IMR-90 (cell line): ENCODE measurements at regions of chr10 and their contacts with region 1.

Region 1: DNA sequence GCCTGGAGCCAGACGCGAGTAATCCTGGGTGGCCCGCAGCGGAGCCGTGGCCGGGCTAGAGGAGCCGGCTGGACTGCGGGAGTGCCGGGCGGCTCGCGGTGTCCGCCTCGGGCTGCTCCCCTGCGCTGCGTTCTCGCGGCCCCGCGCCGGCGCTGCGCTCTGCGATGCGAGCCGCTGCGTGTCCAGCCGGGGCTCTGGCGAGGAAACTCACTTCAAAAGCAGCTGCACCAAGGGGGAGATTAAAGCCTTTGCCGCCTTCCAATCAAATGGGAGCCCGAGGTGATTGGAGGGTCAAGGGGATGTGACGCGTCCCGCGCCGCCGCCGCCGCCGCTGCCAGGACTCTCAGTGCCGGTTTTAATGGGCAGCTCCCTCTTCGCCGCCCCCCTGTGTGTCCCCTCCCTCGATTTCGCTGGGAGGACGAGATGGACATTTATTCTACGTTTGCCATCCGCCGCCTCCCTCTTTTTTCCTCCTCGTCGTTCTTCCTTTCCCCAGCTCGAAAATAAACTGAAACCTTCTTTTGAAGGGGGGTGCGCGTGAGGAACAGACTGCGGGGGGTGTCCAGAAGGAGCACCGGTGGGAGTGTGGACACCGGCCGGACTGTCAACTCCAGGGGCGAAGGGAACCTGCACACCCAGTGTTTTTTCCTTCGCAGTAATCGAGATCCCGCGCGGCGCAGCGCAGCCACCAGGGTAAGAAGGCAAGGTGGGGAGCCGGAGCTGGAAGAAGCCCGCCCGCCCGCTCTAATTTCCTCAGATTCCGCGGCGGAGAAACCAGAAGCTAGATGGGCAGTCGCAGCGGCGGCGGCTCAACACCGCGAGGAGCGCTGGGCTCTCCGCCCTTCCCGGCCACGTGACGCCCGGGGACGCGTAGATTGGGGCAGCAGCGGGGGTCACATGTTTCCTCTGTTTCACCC is at the start of gene ZNF503:
- DNase-seq: peak; percentile 97
- ATAC-seq: peak; percentile 67
- H3K4me3 ChIP-seq: peak within 1 kb of the TSS; percentile 99
- H3K27ac ChIP-seq: peak within 1 kb of the TSS; percentile 100
- H3K4me1 ChIP-seq: peaks cover 2% of the 10 kb centered on the region; the same call in 1 of the 2 replicates
- H3K27me3 ChIP-seq: 0 out of 2 replicates have a peak, but pooled peaks cover 3% of the 10 kb centered on the region
- CTCF ChIP-seq: 0 out of 2 replicates have a peak, but pooled peaks have one; percentile 6
- POLR2A ChIP-seq: peak; percentile 99
- RAD21 ChIP-seq: peak; percentile 26
- total RNA-seq, gene ZNF503: 0.36 and 0.83 TPM in 2 replicates

Region 2: DNA sequence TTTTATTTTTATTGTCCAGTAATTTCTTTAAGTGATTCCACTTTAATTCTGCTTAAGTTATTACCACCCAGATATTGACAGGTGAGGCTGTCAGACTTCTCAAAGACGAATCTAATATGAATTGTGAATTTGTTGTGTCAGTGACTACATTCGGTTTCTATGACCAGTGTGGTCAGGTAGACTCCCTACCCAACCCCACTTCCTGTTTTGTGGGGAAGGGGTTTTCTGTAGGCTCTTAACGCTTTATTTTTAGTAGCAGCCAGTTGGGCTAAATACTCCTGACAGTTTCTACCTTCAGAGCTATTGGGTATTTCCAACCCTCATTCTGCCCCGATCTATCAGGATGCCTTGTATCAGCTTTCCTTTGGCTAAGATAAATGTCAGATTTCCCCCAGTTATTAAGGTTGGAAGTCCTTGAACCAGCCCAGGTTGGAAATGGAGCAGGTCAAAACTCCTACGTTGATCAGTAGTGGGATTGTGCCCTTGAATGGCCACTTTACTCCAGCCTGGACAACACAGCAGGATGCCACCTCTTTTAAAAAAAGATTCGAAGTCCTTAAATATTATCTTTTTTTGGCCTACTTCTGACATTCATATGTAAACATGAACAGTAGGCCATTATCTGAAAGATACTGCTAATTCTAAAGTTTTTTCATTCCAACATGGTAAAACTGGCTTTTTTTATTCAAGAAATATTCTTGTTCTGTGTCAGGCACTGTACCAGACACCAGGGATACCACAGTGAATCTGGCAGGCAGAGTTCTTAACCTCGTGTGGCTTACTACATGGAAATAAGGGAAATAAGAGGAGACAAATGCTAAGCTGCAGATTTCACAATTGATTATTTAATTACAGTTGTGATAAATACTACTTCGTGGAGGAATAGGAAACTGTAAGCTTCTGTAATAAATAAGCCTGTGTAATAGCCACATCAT is 423.6 kb before region 1 on chr10:
- CTCF ChIA-PET with region 1: no interaction called
- POLR2A ChIA-PET with region 1: no interaction called
- dilution Hi-C with region 1: no loop called
- in situ Hi-C with region 1: no loop called
- intact Hi-C with region 1: no loop called
- DNase-seq: no peak
- ATAC-seq: no peak
- H3K4me3 ChIP-seq: no peak overlapping the region
- H3K27ac ChIP-seq: no peak overlapping the region
- H3K4me1 ChIP-seq: peaks cover 3% of the 10 kb centered on the region; the same call in 1 of the 2 replicates
- H3K27me3 ChIP-seq: no peaks in the 10 kb centered on the region
- CTCF ChIP-seq: no peak
- POLR2A ChIP-seq: no peak
- RAD21 ChIP-seq: no peak

Region 3: GRCh38 chr10:75651417-75651816 is 249.6 kb after region 1 on chr10:
- CTCF ChIA-PET with region 1: no interaction called
- POLR2A ChIA-PET with region 1: no interaction called
- dilution Hi-C with region 1: no loop called
- in situ Hi-C with region 1: no loop called
- intact Hi-C with region 1: loop called (anchors 1 kb)
- DNase-seq: no peak
- ATAC-seq: no peak
- H3K4me3 ChIP-seq: no peak overlapping the region
- H3K27ac ChIP-seq: no peak overlapping the region
- H3K4me1 ChIP-seq: no peaks in the 10 kb centered on the region
- H3K27me3 ChIP-seq: peaks cover 2% of the 10 kb centered on the region; the same call in 1 of the 2 replicates
- CTCF ChIP-seq: no peak
- POLR2A ChIP-seq: no peak
- RAD21 ChIP-seq: no peak

Region 4: GRCh38 chr10:76106611-76107010 is 704.8 kb after region 1 on chr10:
- CTCF ChIA-PET with region 1: no interaction called
- POLR2A ChIA-PET with region 1: no interaction called
- dilution Hi-C with region 1: no loop called
- in situ Hi-C with region 1: no loop called
- intact Hi-C with region 1: loop called (anchors 2 kb)
- DNase-seq: no peak
- ATAC-seq: no peak
- H3K4me3 ChIP-seq: no peak overlapping the region
- H3K27ac ChIP-seq: no peak overlapping the region
- H3K4me1 ChIP-seq: peaks cover 7% of the 10 kb centered on the region; the same call in 1 of the 2 replicates
- H3K27me3 ChIP-seq: no peaks in the 10 kb centered on the region; the same call in 1 of the 2 replicates
- CTCF ChIP-seq: no peak
- POLR2A ChIP-seq: no peak
- RAD21 ChIP-seq: no peak

Region 5: GRCh38 chr10:76303682-76304316 is 902.0 kb after region 1 on chr10:
- CTCF ChIA-PET with region 1: no interaction called
- POLR2A ChIA-PET with region 1: interaction called, 5 read pairs
- dilution Hi-C with region 1: no loop called
- in situ Hi-C with region 1: loop called (anchors 10 kb)
- intact Hi-C with region 1: loop called (anchors 2 kb)
- DNase-seq: peak; percentile 71
- ATAC-seq: peak; percentile 86
- H3K4me3 ChIP-seq: no peak overlapping the region
- H3K27ac ChIP-seq: no peak overlapping the region
- H3K4me1 ChIP-seq: peaks cover 9% of the 10 kb centered on the region
- H3K27me3 ChIP-seq: 0 out of 2 replicates have a peak, but pooled peaks cover 2% of the 10 kb centered on the region
- CTCF ChIP-seq: peak; percentile 55
- POLR2A ChIP-seq: no peak
- RAD21 ChIP-seq: peak; percentile 67

Region 6: DNA sequence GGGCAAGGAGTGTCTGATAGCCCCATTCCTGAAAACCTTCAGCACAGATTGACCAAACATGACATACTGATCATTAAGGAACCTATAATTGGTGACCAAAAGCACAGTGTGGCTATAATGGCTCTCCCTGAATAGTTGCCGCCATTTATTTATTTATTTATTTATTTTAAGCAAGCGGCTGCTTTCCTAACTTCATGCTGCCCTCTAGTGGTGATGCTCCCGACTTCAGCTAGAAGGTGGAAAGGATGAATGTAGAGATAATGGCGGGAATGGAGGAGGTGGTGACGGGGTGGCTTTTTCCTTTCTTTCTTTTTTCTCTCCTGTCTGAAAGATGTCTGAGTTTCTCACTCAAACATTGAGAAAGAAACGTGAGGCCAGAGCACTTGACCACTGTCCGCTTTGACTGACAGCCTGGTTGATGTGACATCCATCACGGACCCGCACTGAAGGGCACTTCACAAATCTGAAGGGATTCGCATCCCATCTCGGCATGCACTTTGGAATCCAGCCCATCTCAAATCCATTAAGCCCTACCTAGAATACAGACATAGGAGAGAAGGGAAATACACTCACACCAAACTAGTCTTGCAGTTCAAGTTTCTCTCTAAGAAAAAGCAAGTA is 1145.6 kb after region 1 on chr10:
- CTCF ChIA-PET with region 1: no interaction called
- POLR2A ChIA-PET with region 1: no interaction called
- dilution Hi-C with region 1: no loop called
- in situ Hi-C with region 1: loop called (anchors 25 kb)
- intact Hi-C with region 1: loop called (anchors 2 kb)
- DNase-seq: peak; percentile 77
- ATAC-seq: peak; percentile 64
- H3K4me3 ChIP-seq: no peak overlapping the region
- H3K27ac ChIP-seq: no peak overlapping the region
- H3K4me1 ChIP-seq: peaks cover 4% of the 10 kb centered on the region
- H3K27me3 ChIP-seq: peaks cover 5% of the 10 kb centered on the region
- CTCF ChIP-seq: peak; percentile 91
- POLR2A ChIP-seq: no peak
- RAD21 ChIP-seq: peak; percentile 93

Region 7: DNA sequence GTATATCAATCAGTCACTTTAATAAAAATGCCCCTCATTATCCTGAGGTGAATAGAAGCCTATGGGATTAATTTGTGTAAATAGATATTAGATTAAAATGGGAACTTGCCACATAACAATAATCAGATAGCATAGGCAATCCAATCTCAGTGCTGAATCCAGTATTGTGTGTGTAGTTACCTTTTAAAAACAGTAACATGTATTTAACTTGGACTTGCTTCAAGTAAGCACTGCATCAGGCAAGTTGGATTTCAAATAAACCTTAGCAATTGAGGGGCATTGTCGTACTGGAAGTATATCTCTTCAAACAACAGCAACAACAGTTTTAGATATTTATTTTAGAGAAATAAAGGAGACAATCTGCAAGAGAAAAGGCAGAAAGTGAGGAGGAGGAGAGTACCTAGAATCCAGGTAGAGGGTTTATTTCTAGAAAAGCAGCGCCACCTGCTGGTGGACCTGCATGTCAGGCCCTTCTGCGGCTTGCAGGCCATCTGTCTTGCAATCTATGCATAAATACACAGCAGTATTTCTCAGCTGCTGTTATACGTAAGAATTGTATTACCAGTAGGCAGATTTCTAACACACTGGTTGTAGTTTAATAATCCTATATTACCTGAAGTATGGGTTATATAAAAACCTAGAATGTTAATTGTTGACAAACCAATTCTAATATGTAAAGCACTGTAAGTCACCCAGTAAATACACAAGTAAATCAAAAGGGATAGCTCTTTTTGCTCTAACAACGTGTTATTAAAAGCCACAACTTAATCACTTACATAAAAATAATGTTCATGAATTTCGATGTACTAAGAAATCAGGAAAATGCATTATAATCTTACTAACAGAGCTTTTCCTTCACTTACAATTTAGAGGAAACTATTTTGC is 1583.0 kb after region 1 on chr10:
- CTCF ChIA-PET with region 1: no interaction called
- POLR2A ChIA-PET with region 1: no interaction called
- dilution Hi-C with region 1: no loop called
- in situ Hi-C with region 1: loop called (anchors 25 kb)
- intact Hi-C with region 1: loop called (anchors 2 kb)
- DNase-seq: peak; percentile 79
- ATAC-seq: peak; percentile 85
- H3K4me3 ChIP-seq: no peak overlapping the region
- H3K27ac ChIP-seq: no peak overlapping the region
- H3K4me1 ChIP-seq: no peaks in the 10 kb centered on the region; the same call in 1 of the 2 replicates
- H3K27me3 ChIP-seq: peaks cover 3% of the 10 kb centered on the region; the same call in 1 of the 2 replicates
- CTCF ChIP-seq: peak; percentile 81
- POLR2A ChIP-seq: no peak
- RAD21 ChIP-seq: peak; percentile 72